ENCODE measurements at regions of chr1 and their contacts with region 1.

Region 1: GRCh38 chr1:95043141-95043980 is 29.4 kb downstream of the ALG14 start:
- DNase-seq: peak; percentile 80 to 81
- ATAC-seq: peak; percentile 85 to 96 (median 93)
- H3K4me3 ChIP-seq: no peak overlapping the region
- H3K27ac ChIP-seq: no peak overlapping the region
- H3K4me1 ChIP-seq: no peaks in the 10 kb centered on the region
- H3K27me3 ChIP-seq: no peaks in the 10 kb centered on the region
- CTCF ChIP-seq: peak; percentile 99

Region 2: GRCh38 chr1:94854458-94855306 is 188.7 kb before region 1 on chr1:
- intact Hi-C with region 1: loop called (anchors 1 to 2 kb)
- DNase-seq: peak; percentile 84 to 89
- ATAC-seq: peak; percentile 95 to 98 (median 96)
- H3K4me3 ChIP-seq: peak overlapping the region; percentile 54
- H3K27ac ChIP-seq: no peak overlapping the region
- H3K4me1 ChIP-seq: no peaks in the 10 kb centered on the region
- H3K27me3 ChIP-seq: peaks cover 0 to 7% (median 0%) of the 10 kb centered on the region in 3 donors
- CTCF ChIP-seq: peak; percentile 89

Region 3: GRCh38 chr1:94983171-94983739 is 60.1 kb before region 1 on chr1:
- intact Hi-C with region 1: no loop called
- DNase-seq: peak in 1 of 2 donors; percentile 26
- ATAC-seq: peak in 2 of 4 donors; percentile 55 to 61
- H3K4me3 ChIP-seq: no peak overlapping the region
- H3K27ac ChIP-seq: no peak overlapping the region
- H3K4me1 ChIP-seq: no peaks in the 10 kb centered on the region
- H3K27me3 ChIP-seq: no peaks in the 10 kb centered on the region
- CTCF ChIP-seq: no peak